Body of pancreas (tissue), 4 donors: ENCODE measurements at regions of chr7 and their contacts with region 1.

Region 1: DNA sequence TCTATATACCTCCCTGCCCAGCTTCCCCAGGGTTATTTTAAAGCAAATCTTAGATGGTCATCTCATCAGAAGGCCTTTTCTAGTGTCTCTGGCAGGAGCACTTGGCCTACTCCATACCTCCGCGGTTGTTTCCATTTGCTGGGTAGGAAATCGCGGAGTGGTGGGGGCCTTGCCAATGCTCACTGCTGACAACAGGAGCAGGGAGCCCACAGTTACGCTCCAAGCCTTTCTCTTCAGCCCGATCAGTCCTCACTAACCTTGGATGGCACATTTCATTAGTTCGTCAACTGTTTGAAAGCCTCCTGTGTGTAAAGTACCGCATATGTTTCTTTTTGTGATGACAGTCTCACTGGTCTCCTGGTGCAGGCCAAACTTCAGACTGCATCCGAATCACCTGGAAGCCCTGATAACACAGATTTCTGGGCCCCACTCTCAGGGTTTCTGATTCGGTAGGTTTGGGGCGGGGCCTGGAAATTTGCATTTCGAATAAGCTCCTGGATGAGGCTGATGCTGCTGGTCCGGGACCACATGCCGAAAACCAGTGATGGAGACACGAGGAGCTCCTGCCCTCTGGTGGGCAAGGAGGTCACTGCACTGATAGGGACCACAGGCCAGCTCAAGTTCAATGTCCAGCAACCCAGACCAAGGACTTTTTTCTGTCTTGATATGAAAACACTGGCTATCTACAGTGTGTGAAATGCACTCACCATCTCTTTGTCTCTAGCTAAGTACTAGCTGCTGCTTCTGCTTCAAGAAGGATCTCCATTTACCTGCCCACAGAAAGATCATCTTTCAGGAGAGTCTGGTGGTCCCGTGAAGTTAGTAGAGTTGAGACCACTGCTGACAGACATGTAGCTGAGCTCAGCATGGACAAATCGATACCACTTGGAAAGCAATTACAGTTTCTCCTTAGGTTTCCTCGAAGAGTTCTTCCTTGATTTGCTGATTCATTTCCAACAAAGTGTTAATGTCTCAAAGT is 14.0 kb downstream of the LRGUK start:
- DNase-seq: peak; percentile 72 to 81 (median 76)
- ATAC-seq: peak; percentile 84
- H3K4me3 ChIP-seq: no peak overlapping the region
- H3K27ac ChIP-seq: no peak overlapping the region
- H3K4me1 ChIP-seq: no peaks in the 10 kb centered on the region
- H3K27me3 ChIP-seq: no peaks in the 10 kb centered on the region
- CTCF ChIP-seq: peak; percentile 77 to 90 (median 79)
- POLR2A ChIP-seq: no peak

Region 2: GRCh38 chr7:133633062-133633461 is 508.1 kb before region 1 on chr7:
- intact Hi-C with region 1: no loop called
- DNase-seq: no peak
- ATAC-seq: no peak
- H3K4me3 ChIP-seq: no peak overlapping the region
- H3K27ac ChIP-seq: no peak overlapping the region
- H3K4me1 ChIP-seq: no peaks in the 10 kb centered on the region
- H3K27me3 ChIP-seq: no peaks in the 10 kb centered on the region
- CTCF ChIP-seq: no peak
- POLR2A ChIP-seq: no peak

Region 3: DNA sequence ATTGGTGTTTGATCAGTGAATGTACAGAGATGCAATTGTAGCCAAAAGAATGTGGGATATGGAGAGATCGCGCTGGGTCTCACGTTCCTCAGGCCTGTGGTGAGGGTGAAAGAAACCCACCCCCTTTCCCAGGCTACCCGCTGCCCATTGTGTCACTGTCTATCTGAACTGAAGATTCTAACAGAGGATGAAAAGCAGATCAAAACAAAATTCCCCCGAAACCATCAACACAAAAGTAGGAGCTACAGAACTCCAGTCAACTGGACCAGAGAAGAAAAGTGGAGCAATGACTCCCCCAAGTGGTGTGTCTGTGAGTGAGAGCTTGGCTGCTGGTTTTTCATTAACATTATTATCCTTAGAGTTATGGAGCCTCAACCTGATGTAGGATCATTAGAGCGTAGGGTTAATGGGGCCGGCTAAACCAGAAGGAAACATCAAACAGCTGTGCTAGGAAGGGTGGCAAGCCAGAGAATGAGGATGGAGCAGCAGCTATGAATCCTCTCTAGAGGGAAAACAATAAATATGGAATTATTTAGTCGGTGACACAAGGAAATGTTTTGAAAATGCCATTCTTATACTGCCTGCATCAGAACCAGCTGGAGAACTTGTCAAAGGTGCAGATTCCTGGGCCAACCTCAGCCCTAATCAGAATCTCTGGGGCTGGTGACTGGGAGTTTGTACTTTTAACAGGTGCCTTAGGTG is 279.4 kb after region 1 on chr7:
- intact Hi-C with region 1: loop called (anchors 10 kb)
- DNase-seq: peak; percentile 66 to 70 (median 69)
- ATAC-seq: peak; percentile 81
- H3K4me3 ChIP-seq: no peak overlapping the region
- H3K27ac ChIP-seq: no peak overlapping the region
- H3K4me1 ChIP-seq: peaks cover 4% of the 10 kb centered on the region
- H3K27me3 ChIP-seq: no peaks in the 10 kb centered on the region
- CTCF ChIP-seq: peak; percentile 27 to 89 (median 81)
- POLR2A ChIP-seq: no peak